AG04450 (cell line): ENCODE measurements at regions of chr5 and their contacts with region 1.

Region 1: DNA sequence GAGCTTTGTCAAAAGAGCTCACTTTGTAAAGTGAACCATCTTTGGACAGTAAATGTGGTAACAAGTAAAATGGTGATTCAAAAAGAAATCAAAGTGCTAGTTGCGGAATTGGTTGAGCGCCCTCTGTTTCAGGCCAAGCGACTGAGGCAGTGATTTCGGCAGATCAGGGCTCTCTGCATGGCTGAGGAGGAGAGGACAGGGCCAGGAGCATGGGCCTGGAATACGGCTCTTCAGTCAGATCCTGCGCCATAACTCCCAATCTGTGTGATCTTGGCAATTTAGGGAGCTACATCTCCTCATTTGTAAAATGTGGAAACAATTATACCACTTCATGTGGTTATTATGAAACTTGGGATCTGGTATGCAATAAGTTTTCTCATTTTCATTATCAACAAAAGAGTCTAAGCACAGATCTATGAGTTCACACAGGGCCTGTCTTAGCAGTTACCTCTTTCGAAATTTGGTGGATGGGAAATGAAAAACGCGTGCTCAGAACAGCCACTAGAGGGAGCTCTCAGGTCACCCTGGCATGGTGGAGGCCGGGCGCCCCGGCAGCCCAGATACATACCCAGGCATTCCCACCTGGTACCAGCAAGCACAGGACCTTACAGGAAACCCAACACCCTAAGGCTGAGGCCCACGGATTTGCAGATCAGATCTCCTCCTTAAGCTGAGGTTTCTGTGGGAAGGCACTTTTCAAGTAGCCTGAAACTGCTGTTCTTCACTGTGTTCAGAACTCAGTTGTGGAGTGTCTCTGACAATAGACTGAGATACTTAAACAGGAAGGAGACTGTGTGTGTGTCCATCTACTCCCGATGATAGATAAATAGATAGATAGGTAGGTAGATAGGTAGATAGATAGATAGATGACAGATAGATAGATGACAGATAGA is 303.7 kb downstream of the RAB3C start:
- DNase-seq: peak; percentile 37
- H3K4me3 ChIP-seq: no peak overlapping the region
- H3K27ac ChIP-seq: no peak overlapping the region
- H3K27me3 ChIP-seq: no peaks in the 10 kb centered on the region
- CTCF ChIP-seq: peak; percentile 93

Region 2: DNA sequence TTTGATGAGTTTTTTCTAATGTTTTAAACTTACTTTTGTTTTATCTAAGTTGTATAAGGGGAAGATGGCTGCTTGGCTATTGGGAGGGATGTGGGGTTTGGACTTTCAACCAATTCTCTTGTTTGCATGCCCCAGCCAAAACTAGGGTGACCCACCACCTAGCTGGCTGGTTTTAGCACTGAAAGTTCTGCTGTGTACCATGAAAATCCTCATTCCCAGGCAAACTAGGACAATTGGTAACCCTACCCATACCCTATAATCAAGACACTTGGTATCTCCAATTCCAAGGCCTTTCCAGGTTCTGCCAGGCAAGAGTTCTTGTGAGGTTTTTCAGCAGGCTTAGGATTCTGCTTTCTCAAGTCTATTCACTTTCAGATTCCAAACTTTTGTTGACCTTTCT is 290.6 kb before region 1 on chr5:
- CTCF ChIA-PET with region 1: no interaction called
- POLR2A ChIA-PET with region 1: no interaction called
- DNase-seq: no peak
- H3K4me3 ChIP-seq: no peak overlapping the region
- H3K27ac ChIP-seq: no peak overlapping the region
- H3K27me3 ChIP-seq: no peaks in the 10 kb centered on the region
- CTCF ChIP-seq: no peak

Region 3: DNA sequence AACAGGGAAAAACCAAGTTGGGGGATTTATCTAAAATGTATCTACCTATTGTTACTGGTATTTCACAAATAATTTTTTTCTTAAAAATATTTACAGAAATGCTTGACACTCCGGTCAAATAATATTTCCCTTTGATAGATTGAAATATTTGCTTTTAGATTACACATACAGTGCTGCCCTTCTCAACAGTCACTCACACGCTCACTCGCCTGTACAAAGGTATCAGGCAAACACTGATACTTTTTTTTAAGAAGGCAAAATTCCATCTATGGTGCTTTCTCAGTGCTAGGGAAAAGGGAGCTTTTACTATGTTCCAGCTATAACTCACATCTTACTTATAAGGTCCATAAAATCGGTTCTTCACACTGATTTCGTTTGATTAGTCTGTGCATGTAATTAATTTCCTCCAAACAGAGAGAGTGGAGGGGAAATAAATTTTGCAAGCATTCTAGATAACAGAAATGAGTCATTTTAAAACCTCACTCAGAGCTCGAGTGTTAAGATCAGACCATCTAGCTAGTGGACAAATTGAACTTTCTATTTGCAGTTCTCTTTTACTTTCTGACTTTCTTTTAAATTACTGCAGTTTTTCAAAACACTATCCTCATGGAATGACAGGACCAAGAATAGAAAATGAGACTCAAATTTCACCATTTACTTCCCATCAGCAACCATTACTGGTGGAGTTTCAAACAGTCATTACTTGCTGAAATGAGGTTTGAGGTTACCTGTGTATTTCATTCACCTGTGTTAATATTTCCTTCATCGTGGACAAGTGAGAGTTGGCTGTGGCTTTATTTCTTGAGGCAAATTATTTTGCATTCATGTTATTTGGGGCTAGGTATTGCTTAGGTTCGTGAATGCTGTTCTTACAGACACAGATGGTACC is 30.5 kb before region 1 on chr5:
- CTCF ChIA-PET with region 1: interaction called, 15 read pairs
- POLR2A ChIA-PET with region 1: no interaction called
- DNase-seq: no peak
- H3K4me3 ChIP-seq: no peak overlapping the region
- H3K27ac ChIP-seq: no peak overlapping the region
- H3K27me3 ChIP-seq: peaks cover 4% of the 10 kb centered on the region
- CTCF ChIP-seq: no peak

Region 4: DNA sequence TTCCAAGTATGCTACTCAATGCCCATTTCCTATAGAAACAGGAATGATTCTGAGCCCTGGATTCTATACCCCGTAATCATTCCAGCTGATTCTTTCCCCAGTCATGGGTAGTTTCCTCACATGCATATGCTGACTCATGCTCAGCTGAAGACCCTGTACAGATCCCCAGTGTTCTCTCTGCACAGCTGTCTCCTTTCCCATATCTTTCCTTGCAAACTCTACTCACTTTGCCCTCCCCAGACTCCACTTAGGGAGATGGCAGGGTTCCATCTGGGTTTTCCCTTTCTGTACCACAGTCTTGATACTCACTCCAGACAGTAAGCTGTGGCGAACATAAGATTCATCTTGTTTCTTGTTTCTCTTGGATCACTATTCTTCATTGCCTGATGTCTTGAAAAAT is 53.9 kb after region 1 on chr5:
- CTCF ChIA-PET with region 1: interaction called, 21 read pairs
- POLR2A ChIA-PET with region 1: no interaction called
- DNase-seq: peak; percentile 71
- H3K4me3 ChIP-seq: no peak overlapping the region
- H3K27ac ChIP-seq: no peak overlapping the region
- H3K27me3 ChIP-seq: no peaks in the 10 kb centered on the region
- CTCF ChIP-seq: no peak

Region 5: GRCh38 chr5:58983526-58984452 is 97.2 kb after region 1 on chr5:
- CTCF ChIA-PET with region 1: interaction called, 15 read pairs
- POLR2A ChIA-PET with region 1: no interaction called
- DNase-seq: no peak
- H3K4me3 ChIP-seq: no peak overlapping the region
- H3K27ac ChIP-seq: no peak overlapping the region
- H3K27me3 ChIP-seq: no peaks in the 10 kb centered on the region
- CTCF ChIP-seq: no peak

Region 6: GRCh38 chr5:59007460-59008063 is 121.0 kb after region 1 on chr5:
- CTCF ChIA-PET with region 1: interaction called, 35 read pairs
- POLR2A ChIA-PET with region 1: interaction called, 6 read pairs
- DNase-seq: no peak
- H3K4me3 ChIP-seq: no peak overlapping the region
- H3K27ac ChIP-seq: no peak overlapping the region
- H3K27me3 ChIP-seq: no peaks in the 10 kb centered on the region
- CTCF ChIP-seq: peak; percentile 53

Region 7: GRCh38 chr5:59188419-59189225 is 302.1 kb after region 1 on chr5:
- CTCF ChIA-PET with region 1: interaction called, 75 read pairs
- POLR2A ChIA-PET with region 1: no interaction called
- DNase-seq: no peak
- H3K4me3 ChIP-seq: peak overlapping the region; percentile 28; the same call in 1 of the 2 replicates
- H3K27ac ChIP-seq: no peak overlapping the region
- H3K27me3 ChIP-seq: no peaks in the 10 kb centered on the region
- CTCF ChIP-seq: peak; percentile 72